ENCODE measurements at regions of chr19 and their contacts with region 1.

Region 1: DNA sequence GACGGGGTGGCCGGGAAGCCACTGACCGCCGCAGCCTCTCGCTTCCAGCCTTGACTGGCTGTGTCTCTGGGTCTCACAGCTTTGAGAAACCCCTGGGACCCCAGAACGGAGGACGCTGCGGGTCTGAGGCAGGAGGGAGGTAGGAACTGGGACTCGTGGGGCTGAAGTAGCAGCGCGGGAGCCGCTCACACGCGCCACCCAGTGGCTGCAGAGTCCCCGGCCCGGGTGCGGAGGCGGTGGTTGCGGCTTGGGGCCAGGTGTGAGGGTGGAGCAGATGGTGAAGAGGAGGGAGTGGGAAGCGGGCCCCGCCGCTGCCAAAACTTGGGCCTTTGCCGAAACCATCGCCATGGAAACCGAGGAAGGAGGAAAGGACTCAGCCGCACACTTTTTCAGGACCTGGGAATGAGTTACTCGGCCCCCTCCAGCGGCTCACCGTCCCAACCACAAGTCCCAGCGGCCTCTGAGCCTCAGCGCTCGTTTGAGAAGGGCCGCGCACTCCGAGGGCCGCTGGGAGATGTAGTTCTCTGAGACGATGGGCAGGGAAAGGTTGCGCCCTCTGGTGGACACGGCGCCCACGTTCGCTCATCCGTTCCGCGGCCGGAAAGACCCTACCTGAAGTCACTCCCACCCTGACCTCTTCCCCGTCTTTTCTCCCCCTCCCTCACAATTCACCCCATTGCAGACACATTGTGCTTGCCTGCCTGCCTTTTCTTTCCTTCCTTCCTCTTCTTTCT is 2.2 kb upstream of the SLC17A7 start:
- DNase-seq: peak; percentile 97
- ATAC-seq: peak; percentile 89

Region 2: GRCh38 chr19:49224856-49225255 is 218.7 kb before region 1 on chr19:
- intact Hi-C with region 1: loop called (anchors 2 kb)
- DNase-seq: peak; percentile 56
- ATAC-seq: peak; percentile 80

Region 3: GRCh38 chr19:49363268-49364082 is 80.1 kb before region 1 on chr19 and contains the start of gene DKKL1:
- intact Hi-C with region 1: loop called (anchors 1 kb)
- DNase-seq: peak; percentile 98
- ATAC-seq: peak; percentile 94
- total RNA-seq, gene DKKL1: not detected

Region 4: DNA sequence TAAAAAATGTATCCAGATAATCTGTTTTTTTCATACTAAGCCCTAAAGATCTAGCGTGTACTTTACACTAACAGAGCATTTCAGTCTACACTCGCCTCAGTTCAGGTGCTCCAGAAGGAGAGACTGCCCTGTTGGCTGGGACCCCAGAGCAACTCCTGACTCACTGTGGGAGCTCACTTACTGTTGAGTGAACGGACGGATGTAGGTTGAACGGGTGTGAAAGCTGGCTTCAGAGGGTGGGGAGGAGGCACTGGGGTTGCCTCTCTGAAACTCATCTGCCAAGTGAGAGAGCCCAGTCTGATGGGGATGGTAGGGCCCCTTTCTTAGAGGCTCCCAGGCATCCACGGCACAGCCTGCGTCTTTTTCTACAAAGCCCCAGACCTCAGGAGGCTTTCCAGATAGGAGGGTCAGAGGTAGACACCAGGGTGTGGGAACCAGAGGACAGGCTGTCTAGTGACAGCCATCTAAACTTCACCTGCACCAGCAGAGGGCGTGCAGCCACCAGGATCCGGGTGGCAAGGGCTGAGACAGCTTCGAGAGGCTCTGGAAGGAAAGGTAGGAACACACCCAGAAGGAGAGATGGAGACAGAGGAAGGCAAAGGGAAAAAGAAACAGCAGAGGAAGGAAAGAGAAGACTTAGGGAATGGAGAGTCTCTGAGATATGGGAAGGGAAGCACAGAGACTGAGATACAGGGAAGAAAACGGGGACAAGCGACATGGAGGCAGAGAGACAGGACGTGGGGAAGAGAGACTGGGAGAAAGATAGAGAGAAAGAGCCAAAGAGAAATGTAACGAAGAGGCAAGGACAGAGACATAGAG is 51.7 kb before region 1 on chr19:
- intact Hi-C with region 1: loop called (anchors 1 kb)
- DNase-seq: peak; percentile 84
- ATAC-seq: peak; percentile 83

Region 5: DNA sequence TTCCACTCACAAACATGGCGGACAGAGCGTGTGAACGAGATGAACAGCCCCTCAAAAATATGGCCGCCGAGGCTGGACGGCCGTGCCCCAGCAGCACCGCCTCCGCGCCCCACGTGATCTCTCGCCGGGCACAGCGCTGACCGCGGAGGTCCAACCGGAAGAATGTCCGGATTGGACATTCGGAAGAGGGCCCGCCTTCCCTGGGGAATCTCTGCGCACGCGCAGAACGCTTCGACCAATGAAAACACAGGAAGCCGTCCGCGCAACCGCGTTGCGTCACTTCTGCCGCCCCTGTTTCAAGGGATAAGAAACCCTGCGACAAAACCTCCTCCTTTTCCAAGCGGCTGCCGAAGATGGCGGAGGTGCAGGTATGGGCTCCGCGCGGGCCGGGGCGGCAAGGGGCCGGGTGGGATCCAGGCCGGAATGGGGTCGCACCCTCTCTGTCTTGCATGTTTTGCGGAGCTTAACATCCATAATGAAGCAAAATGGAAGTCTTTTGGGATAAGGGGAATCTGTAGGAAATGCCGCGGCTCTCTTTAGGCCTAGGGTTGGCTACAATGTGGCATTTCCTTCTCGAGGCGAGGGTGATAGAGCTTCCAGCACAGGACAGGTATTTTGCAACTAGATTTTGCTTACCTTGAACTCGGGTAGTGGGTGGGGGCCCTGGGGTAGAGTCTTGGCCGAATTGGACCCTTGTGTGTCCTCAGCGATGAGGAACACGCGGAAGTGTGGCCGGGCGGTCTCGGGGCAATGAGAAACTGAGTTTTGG is 43.9 kb after region 1 on chr19 and contains the start of gene RPL13A:
- intact Hi-C with region 1: no loop called
- DNase-seq: peak; percentile 100
- ATAC-seq: peak; percentile 99
- total RNA-seq, gene RPL13A: 1,486 TPM

Region 6: DNA sequence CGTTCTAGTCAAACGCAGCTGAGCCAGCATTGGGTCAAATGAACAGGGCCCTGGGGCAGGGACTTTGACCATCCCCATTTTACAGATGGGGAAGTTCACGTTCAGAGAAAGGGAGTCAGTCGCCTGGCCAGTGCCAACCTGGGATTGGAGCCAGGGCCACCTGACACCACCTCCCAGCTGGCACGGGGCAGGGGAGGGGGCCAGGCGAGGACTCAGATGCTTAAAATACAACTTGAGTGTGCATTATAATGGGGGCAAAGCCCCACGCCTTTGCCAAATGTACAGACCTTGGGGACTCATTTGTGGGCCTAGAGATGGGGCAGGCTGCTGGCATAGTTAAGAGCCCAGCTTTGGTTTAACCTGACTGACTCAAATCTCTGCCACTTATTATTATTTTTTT is 162.1 kb after region 1 on chr19:
- intact Hi-C with region 1: no loop called
- DNase-seq: no peak
- ATAC-seq: no peak

Measured in Right ventricle myocardium inferior (tissue), 1 donor.